H1 (cell line): ENCODE measurements at regions of chr2 and their contacts with region 1.

Region 1: DNA sequence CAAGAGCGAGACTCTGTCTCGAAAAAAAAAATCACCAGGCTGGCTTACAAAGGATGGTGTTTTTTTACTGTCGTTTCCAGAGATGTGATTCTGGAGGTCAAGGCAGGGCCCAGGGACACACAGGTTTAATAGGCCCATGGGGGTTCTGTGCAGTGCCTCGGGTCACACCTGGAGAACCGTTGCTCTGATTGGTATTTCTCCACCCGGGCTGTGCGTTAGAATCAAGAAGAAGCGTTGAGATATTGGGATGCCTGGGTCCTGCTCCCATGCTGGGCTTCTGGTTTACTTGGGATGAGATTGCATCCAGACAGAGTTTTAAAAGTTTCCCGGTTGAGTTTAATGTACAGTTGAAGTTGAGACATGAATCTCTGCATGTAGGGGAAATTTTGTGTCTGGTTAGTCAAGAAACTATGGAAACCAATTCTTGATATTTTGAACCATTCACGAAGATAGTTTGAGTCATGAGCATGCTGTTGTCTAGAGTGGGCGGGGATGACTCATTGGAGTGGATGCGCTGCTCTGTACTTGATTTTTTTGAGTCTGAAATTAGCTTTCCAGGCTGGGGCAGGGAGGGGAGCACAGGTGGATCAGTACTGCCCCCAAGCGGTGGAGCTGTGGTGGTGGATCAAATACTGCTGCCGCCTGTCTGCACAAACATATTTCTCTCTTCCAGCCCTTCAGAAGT is 50.1 kb downstream of the GREB1 start:
- DNase-seq: peak in 1 of 2 experiments; percentile 82
- H3K4me3 ChIP-seq: no peak overlapping the region
- H3K27ac ChIP-seq: no peak overlapping the region
- H3K4me1 ChIP-seq: peaks cover 2 to 4% (median 2%) of the 10 kb centered on the region in 4 experiments; a peak in 5 of 7 replicates
- H3K27me3 ChIP-seq: no peaks in the 10 kb centered on the region
- CTCF ChIP-seq: peak; percentile 85 to 95 (median 95)
- EP300 ChIP-seq: no peak
- POLR2A ChIP-seq: no peak
- RAD21 ChIP-seq: peak; percentile 96 to 97

Region 2: GRCh38 chr2:11357428-11357972 is 226.5 kb before region 1 on chr2:
- CTCF ChIA-PET with region 1: no interaction called
- POLR2A ChIA-PET with region 1: no interaction called
- DNase-seq: no peak
- H3K4me3 ChIP-seq: no peak overlapping the region
- H3K27ac ChIP-seq: no peak overlapping the region
- H3K4me1 ChIP-seq: no peaks in the 10 kb centered on the region
- H3K27me3 ChIP-seq: no peaks in the 10 kb centered on the region; a peak in 1 of 7 replicates
- CTCF ChIP-seq: no peak
- EP300 ChIP-seq: no peak
- POLR2A ChIP-seq: no peak
- RAD21 ChIP-seq: no peak

Region 3: GRCh38 chr2:11417946-11418585 is 165.9 kb before region 1 on chr2:
- CTCF ChIA-PET with region 1: interaction called, 12 read pairs
- POLR2A ChIA-PET with region 1: no interaction called
- DNase-seq: no peak
- H3K4me3 ChIP-seq: no peak overlapping the region
- H3K27ac ChIP-seq: no peak overlapping the region
- H3K4me1 ChIP-seq: no peaks in the 10 kb centered on the region
- H3K27me3 ChIP-seq: no peaks in the 10 kb centered on the region; a peak in 2 of 7 replicates
- CTCF ChIP-seq: peak; percentile 18 to 71 (median 53)
- EP300 ChIP-seq: no peak
- POLR2A ChIP-seq: no peak
- RAD21 ChIP-seq: peak; percentile 50 to 61

Region 4: GRCh38 chr2:11477994-11478393 is 106.0 kb before region 1 on chr2:
- CTCF ChIA-PET with region 1: interaction called, 558 read pairs
- POLR2A ChIA-PET with region 1: interaction called, 7 read pairs
- DNase-seq: peak in 1 of 2 experiments; percentile 95
- H3K4me3 ChIP-seq: no peak overlapping the region
- H3K27ac ChIP-seq: no peak overlapping the region
- H3K4me1 ChIP-seq: peaks cover 0 to 3% (median under 1%) of the 10 kb centered on the region in 4 experiments; a peak in 3 of 7 replicates
- H3K27me3 ChIP-seq: peaks cover 0 to 16% (median 12%) of the 10 kb centered on the region in 4 experiments; a peak in 6 of 7 replicates
- CTCF ChIP-seq: peak; percentile 45 to 90 (median 78)
- EP300 ChIP-seq: no peak
- POLR2A ChIP-seq: no peak
- RAD21 ChIP-seq: peak; percentile 86 to 90

Region 5: DNA sequence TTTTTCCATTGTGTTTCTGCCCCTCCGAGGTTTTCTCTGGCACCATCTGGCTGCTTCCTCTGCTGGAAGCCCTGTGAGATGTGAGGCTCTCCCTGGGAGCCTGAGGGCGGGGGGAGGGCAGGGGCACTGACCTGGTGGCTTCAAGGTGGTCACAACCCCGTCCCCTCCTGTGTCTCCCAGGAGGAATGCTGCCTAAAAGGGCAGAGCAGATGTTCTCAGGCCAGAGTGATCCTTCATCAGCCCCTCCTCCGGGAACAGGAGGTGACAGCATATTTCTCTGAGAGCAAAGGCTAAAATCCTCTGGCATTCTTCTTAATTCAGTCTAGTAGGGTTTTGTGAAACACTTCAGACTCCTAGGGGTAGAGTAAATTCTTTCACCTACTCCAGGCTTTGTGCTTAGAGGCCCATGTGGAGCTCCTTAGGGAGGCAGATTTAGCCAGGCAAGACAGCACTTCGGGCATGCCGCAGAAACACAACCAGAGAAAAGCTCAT is 68.4 kb before region 1 on chr2:
- CTCF ChIA-PET with region 1: interaction called, 24 read pairs
- POLR2A ChIA-PET with region 1: no interaction called
- DNase-seq: no peak
- H3K4me3 ChIP-seq: no peak overlapping the region
- H3K27ac ChIP-seq: 0 out of 2 replicates have a peak overlapping the region, but pooled peaks have one; percentile 27
- H3K4me1 ChIP-seq: peaks cover 1 to 13% (median 12%) of the 10 kb centered on the region in 4 experiments; a peak in 5 of 7 replicates
- H3K27me3 ChIP-seq: no peaks in the 10 kb centered on the region
- CTCF ChIP-seq: no peak
- EP300 ChIP-seq: no peak
- POLR2A ChIP-seq: no peak
- RAD21 ChIP-seq: no peak

Region 6: GRCh38 chr2:11539317-11540152 is 44.4 kb before region 1 on chr2:
- CTCF ChIA-PET with region 1: interaction called, 377 read pairs
- POLR2A ChIA-PET with region 1: interaction called, 4 read pairs
- DNase-seq: no peak
- H3K4me3 ChIP-seq: no peak overlapping the region
- H3K27ac ChIP-seq: no peak overlapping the region
- H3K4me1 ChIP-seq: peaks cover 13 to 38% (median 28%) of the 10 kb centered on the region in 4 experiments
- H3K27me3 ChIP-seq: no peaks in the 10 kb centered on the region
- CTCF ChIP-seq: no peak
- EP300 ChIP-seq: no peak
- POLR2A ChIP-seq: no peak
- RAD21 ChIP-seq: no peak

Region 7: DNA sequence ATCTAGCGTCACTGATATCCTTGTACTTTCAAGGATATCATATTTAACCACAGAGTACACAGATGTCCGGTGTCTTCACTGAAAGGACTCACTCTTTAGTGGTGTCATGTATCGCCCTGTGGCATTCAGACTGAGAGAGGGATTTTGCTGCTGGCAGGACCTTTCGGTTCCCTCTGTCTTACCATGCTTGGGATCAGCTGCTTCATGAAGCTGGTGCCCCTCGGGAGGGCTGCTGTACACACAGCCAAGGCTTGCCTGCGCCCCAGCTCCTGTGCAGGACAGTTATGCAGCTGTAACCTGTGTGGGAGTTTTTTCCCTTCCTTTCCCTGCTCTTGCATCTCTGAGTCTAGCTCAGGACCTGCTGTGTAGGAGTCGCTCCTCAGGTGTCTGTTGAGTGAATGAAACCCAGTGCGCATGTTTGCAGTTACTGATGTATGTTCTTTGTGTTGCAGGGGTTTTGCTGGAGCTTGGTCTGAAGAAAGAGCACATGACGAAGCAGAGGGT is 14.3 kb after region 1 on chr2:
- CTCF ChIA-PET with region 1: interaction called, 16 read pairs
- POLR2A ChIA-PET with region 1: interaction called, 4 read pairs
- DNase-seq: no peak
- H3K4me3 ChIP-seq: no peak overlapping the region
- H3K27ac ChIP-seq: no peak overlapping the region
- H3K4me1 ChIP-seq: 0 out of 7 replicates have a peak, but pooled peaks cover 0 to 3% (median 0%) of the 10 kb centered on the region in 4 experiments
- H3K27me3 ChIP-seq: no peaks in the 10 kb centered on the region
- CTCF ChIP-seq: no peak
- EP300 ChIP-seq: no peak
- POLR2A ChIP-seq: no peak
- RAD21 ChIP-seq: no peak

Region 8: DNA sequence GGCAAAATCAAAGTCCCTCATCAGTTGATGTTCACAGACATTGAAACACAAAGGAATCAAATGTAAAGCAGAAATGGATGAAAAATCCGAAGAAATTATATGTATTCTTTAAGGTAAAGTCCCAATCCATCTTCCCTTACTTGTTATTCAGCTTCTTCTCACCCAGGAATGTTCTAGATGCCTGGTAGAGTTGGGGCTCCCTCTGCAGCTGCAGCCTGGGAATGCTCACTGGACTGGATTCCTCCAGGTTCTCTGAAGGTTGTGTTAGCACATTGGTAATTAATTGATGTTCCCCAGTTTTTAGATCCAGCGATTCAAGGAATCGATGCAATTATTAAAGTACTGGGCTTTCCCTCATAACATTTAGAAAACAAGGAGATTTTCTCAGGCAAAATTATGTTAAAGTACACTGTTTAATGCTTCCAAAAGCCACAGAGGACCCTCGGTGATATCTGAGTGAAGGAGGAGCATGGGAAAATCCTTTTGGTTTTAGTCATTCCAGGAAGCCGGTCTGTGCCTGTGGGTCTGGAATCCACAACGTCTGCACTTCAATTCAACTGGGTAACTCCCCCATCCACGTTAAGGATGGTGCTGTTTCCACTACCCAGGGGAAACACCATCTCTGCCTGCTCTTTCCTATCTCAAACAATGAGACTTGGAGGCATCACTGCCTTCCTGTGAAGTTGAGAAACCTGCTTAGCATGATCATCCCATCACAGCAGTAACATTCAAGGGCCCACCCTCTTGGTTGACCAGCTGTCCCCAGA is 64.0 kb after region 1 on chr2:
- CTCF ChIA-PET with region 1: interaction called, 21 read pairs
- POLR2A ChIA-PET with region 1: no interaction called
- DNase-seq: no peak
- H3K4me3 ChIP-seq: no peak overlapping the region
- H3K27ac ChIP-seq: no peak overlapping the region
- H3K4me1 ChIP-seq: no peaks in the 10 kb centered on the region
- H3K27me3 ChIP-seq: no peaks in the 10 kb centered on the region
- CTCF ChIP-seq: peak; percentile 38 to 55 (median 39)
- EP300 ChIP-seq: no peak
- POLR2A ChIP-seq: no peak
- RAD21 ChIP-seq: peak; percentile 60 to 69